Body of pancreas (tissue), 4 donors: ENCODE measurements at regions of chr16 and their contacts with region 1.

Region 1: DNA sequence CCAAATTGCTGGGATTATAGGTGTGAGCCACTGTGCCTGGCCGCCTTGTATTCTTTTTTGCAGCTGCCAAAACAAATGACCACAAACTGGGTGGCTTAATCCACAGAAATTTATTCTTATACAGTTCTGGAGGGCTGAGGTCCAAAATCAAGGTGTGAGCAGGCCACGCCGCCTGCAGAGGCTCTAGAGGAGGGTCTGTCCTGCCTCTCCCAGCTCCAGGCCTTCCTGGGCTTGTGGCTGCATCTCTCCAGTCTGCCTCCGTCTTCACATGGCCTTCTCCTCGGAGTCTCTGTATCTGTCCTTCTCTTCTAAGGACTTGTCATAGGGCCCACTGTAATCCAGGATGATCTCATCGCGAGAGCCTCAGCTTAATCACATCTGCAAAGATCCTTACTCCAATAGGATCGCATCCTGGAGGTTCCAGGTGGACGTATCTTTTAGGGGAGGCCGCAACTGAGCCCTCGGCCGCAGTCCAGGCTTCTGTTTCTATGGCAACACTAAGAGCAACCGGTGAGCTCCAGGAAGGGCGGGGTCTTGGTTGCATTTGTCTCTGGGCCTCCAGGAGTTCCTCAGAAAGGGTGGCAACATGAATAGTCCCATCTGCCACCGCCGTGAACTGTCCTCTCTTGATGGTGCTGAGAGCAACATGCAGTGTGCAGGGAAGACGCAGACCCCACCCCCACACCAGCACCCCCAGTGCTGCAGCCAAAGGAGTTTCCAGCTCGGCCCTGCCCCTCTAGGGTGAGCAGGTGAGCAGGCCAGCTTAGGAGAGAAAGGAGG is 29.5 kb upstream of the CREBBP start:
- DNase-seq: no peak
- ATAC-seq: no peak
- H3K4me3 ChIP-seq: no peak overlapping the region
- H3K27ac ChIP-seq: no peak overlapping the region
- H3K4me1 ChIP-seq: no peaks in the 10 kb centered on the region
- H3K27me3 ChIP-seq: no peaks in the 10 kb centered on the region
- CTCF ChIP-seq: no peak
- POLR2A ChIP-seq: no peak

Region 2: DNA sequence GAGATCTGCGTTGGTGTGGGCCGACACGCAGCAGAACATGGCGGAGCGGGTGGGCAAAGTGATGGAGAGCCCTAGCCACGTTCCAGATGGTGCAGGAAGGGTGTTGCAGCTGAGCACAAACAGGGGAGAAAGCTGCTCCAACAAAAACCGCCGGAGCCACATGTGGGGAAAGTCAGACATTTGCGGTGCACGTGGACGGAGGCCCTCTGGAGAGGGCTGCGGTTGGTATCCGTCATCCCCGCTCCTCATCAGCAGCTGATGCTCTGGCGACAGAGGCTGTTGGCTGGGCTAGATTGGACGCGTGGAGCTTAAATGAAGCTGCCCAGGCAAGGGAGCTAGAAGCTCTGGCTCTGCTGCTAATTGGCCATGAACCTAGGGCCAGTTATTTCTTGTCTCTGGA is 249.7 kb after region 1 on chr16:
- intact Hi-C with region 1: loop called (anchors 5 kb)
- DNase-seq: no peak
- ATAC-seq: no peak
- H3K4me3 ChIP-seq: no peak overlapping the region
- H3K27ac ChIP-seq: no peak overlapping the region
- H3K4me1 ChIP-seq: no peaks in the 10 kb centered on the region
- H3K27me3 ChIP-seq: no peaks in the 10 kb centered on the region
- CTCF ChIP-seq: no peak
- POLR2A ChIP-seq: no peak